Activated CD4-positive, alpha-beta memory T cell treated with anti-CD3 and anti-CD28 coated beads, Interleukin-2, amount 10 ng/mL, durations not matched to agents 7 days and 5 days (primary cell): ENCODE measurements at regions of chr2 and their contacts with region 1.

Region 1: DNA sequence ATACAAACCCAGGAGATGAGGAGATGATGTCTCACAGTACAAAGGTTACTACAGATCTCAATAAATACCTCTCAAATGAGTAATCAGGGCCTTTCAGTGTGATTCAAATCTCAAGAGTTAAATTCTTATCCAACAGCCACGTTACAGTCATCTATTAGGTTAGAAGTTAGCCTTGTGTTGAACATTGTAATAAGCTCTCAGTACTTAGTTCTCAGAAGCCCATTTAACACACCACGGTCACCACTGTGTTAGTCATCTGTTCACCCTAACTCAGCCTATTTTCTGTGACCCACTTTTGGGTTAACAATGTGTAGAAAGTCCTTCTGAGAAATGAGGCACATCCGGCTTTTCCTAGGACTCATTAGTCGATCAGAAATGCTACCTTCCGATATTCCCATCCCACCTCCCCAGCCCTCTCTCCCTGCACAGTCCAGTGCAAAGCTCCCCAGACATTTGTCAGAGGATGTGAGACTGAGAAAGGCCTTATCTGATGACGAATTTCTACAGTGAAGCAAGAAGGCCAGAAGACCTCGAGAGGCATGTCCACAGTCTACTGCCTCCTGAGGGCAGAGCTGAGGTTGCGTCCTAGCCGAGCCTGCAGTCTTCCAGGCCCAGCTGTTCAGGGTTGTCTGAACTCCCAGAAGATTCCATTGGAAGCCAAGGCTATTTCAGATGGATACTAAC is 92.6 kb downstream of the ACTR2 start:
- DNase-seq: peak; percentile 43
- H3K4me3 Mint-ChIP-seq: peak overlapping the region; percentile 48
- H3K27ac Mint-ChIP-seq: peak overlapping the region; percentile 90
- H3K4me1 Mint-ChIP-seq: peaks cover 38% of the 10 kb centered on the region
- H3K27me3 Mint-ChIP-seq: no peaks in the 10 kb centered on the region

Region 2: GRCh38 chr2:65300761-65301711 is 19.1 kb before region 1 on chr2:
- CTCF ChIA-PET with region 1: interaction called, 8 read pairs
- POLR2A ChIA-PET with region 1: interaction called, 39 read pairs
- DNase-seq: peak; percentile 83
- H3K4me3 Mint-ChIP-seq: peak overlapping the region; percentile 63
- H3K27ac Mint-ChIP-seq: peak overlapping the region; percentile 85
- H3K4me1 Mint-ChIP-seq: peaks cover 52% of the 10 kb centered on the region
- H3K27me3 Mint-ChIP-seq: peaks cover 30% of the 10 kb centered on the region

Region 3: GRCh38 chr2:65357095-65357958 is 37.1 kb after region 1 on chr2:
- CTCF ChIA-PET with region 1: interaction called, 6 read pairs
- POLR2A ChIA-PET with region 1: interaction called, 19 read pairs
- DNase-seq: no peak
- H3K4me3 Mint-ChIP-seq: no peak overlapping the region
- H3K27ac Mint-ChIP-seq: peak overlapping the region; percentile 29
- H3K4me1 Mint-ChIP-seq: peaks cover 64% of the 10 kb centered on the region
- H3K27me3 Mint-ChIP-seq: no peaks in the 10 kb centered on the region

Region 4: DNA sequence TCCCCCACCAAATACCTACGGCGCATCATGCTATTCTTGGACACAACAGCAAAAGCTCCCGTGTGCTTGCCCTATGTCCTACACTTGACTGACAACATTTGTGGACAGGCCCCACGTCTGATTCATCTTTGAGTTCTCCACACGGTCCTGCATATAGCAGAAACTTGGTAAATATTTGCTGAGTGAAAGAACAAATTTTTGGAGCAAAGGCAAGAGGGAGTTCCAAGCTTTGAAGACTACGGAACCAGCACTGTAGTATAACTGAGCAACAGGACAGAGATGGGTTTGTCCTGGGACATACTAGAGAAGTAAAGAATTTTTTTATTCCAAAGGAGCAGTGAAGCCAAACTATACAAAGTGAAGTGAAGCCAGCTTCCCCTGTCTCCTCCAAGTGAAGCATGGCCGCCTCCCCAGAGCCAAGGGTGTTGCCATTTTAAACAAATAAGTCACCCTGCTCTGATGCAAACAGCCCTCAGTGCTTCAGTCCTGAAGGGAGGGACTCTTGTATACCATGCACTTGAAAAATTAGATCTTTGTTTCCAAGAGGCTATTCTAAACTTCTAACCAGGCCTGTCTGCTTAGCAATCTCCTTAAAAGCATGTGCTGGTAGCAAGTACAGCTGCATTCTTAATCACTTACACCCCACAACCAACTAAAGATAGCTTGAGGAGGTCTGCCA is 76.3 kb after region 1 on chr2:
- CTCF ChIA-PET with region 1: no interaction called
- POLR2A ChIA-PET with region 1: no interaction called
- DNase-seq: no peak
- H3K4me3 Mint-ChIP-seq: no peak overlapping the region
- H3K27ac Mint-ChIP-seq: no peak overlapping the region
- H3K4me1 Mint-ChIP-seq: peaks cover 30% of the 10 kb centered on the region
- H3K27me3 Mint-ChIP-seq: peaks cover 1% of the 10 kb centered on the region

Region 5: DNA sequence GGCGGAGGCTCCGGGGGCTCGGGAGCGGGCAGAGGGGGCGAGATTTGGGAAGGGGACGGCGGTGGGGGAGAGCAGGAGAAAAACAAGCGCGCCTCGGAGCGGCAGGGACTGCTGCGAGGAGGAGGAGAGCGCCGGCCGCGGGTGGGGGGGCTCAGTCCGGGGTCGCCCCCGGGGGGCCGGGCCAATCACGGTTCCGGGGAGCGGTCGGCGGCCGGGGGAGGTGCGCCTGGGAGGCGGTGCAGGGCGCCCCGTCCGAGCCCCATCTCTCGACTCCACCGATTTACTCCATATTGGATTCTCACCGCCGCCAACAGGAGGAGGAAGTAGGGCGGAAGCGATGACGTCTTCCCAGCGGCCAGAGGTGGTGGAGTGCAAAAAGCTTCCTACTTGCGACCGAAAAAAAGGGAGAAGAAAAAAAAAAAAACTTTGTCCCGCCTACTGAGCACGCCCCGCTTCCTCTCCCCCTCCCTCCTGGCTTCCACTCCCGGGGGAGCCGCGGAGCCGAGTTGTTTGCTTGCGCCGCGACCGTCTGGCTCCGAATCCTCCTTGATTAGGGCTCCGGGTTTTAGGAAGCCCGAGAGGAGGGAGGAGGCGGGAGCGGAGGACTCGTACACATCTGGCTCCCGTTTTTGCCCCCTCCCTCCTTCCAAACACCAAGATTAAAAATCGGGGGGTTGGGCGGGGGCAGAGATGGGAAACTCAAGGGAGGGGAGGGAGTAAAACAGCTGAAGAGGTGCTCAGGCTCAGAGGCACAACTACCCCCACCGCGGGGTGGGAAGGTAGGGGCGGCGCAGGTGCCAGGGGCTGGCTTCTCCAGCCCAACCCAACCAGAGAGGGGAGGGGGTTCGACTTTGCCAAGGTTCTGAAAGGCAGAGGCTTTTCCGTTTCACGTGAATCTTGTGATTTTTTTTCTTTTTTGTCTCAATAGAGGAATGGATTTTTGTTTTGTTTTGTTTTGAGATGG is 112.3 kb after region 1 on chr2 and contains the start of gene SPRED2:
- CTCF ChIA-PET with region 1: interaction called, 3 read pairs
- POLR2A ChIA-PET with region 1: interaction called, 13 read pairs
- DNase-seq: peak; percentile 81
- H3K4me3 Mint-ChIP-seq: peak within 1 kb of the TSS; percentile 92
- H3K27ac Mint-ChIP-seq: peak within 1 kb of the TSS; percentile 72
- H3K4me1 Mint-ChIP-seq: peaks cover 32% of the 10 kb centered on the region
- H3K27me3 Mint-ChIP-seq: peaks cover 45% of the 10 kb centered on the region
- total RNA-seq, gene SPRED2: 12.2 to 12.6 TPM